Activated CD8-positive, alpha-beta memory T cell treated with anti-CD3 and anti-CD28 coated beads, Interleukin-2, amount 10 ng/mL, durations not matched to agents 7 days and 5 days (primary cell): ENCODE measurements at regions of chr1 and their contacts with region 1.

Region 1: GRCh38 chr1:206551986-206552326 is 44.6 kb downstream of the RASSF5 start:
- DNase-seq: peak; percentile 93
- ATAC-seq: peak; percentile 84
- H3K4me3 Mint-ChIP-seq: peak overlapping the region; percentile 52
- H3K27ac Mint-ChIP-seq: peak overlapping the region; percentile 88
- H3K4me1 Mint-ChIP-seq: peaks cover 49% of the 10 kb centered on the region
- H3K27me3 Mint-ChIP-seq: no peaks in the 10 kb centered on the region

Region 2: GRCh38 chr1:206563367-206564207 is 11.6 kb after region 1 on chr1:
- CTCF ChIA-PET with region 1: interaction called, 50 read pairs
- DNase-seq: peak; percentile 41
- ATAC-seq: no peak
- H3K4me3 Mint-ChIP-seq: peak overlapping the region; percentile 70
- H3K27ac Mint-ChIP-seq: peak overlapping the region; percentile 84
- H3K4me1 Mint-ChIP-seq: peaks cover 91% of the 10 kb centered on the region
- H3K27me3 Mint-ChIP-seq: no peaks in the 10 kb centered on the region